Right lobe of liver (tissue), 6 donors: ENCODE measurements at regions of chr14 and their contacts with region 1.

Region 1: DNA sequence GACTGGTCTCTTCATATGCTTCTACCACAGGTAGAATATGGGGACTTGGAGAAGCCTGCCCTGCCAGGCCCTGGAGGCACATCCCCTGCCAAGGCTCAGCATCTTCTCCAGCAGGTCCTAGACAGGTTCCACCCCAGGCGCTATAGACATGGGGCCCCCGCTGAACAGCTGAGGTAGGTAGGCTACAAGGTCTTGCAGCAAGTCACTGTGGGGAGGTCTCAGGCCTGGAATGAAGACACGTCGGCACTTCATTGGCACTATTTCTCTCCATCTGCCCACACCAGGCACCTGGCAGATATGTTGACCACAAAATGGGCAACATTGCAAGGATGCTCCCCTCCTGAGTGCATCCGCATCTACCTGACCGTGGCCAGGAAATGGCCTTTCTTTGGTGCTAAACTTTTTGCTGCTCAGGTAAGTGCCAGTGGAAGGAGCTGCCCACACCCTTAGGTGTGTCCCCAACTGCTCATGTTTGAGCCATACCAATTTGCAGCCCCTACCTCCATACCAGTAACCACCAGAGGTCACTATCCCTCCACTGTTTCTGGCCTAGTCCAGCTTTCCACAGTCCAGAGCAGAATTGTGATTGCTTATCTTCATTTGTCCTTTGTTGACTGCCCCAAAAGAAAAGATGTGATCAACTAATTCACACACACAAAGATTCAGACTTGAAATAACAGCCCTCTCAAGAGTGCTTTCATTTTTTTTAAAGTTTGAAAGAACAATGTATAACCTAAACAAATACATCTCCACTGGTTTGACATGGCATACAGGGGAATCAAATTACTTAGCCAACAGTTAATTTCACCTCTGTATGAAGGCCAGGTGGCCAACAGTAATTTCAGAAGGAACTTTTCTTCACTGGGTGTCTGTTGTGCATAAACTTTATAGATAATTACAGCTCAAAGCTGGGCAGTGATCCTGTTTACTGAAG is 16.1 kb downstream of the PIGH start:
- DNase-seq: no peak
- ATAC-seq: peak; percentile 88 to 92 (median 90)
- H3K4me3 ChIP-seq: no peak overlapping the region
- H3K27ac ChIP-seq: no peak overlapping the region
- H3K4me1 ChIP-seq: peaks cover 0 to 5% (median 2%) of the 10 kb centered on the region in 4 donors
- H3K27me3 ChIP-seq: no peaks in the 10 kb centered on the region
- CTCF ChIP-seq: peak; percentile 61 to 79 (median 70)
- POLR2A ChIP-seq: no peak

Region 2: GRCh38 chr14:67502881-67503699 is 80.9 kb before region 1 on chr14:
- intact Hi-C with region 1: no loop called
- DNase-seq: no peak
- ATAC-seq: peak in 1 of 4 donors; percentile 56
- H3K4me3 ChIP-seq: no peak overlapping the region
- H3K27ac ChIP-seq: no peak overlapping the region
- H3K4me1 ChIP-seq: no peaks in the 10 kb centered on the region
- H3K27me3 ChIP-seq: no peaks in the 10 kb centered on the region
- CTCF ChIP-seq: no peak
- POLR2A ChIP-seq: no peak

Region 3: GRCh38 chr14:67666750-67667449 is 82.9 kb after region 1 on chr14:
- intact Hi-C with region 1: loop called (anchors 10 kb)
- DNase-seq: no peak
- ATAC-seq: peak; percentile 80 to 94 (median 86)
- H3K4me3 ChIP-seq: no peak overlapping the region
- H3K27ac ChIP-seq: no peak overlapping the region
- H3K4me1 ChIP-seq: peaks cover 0 to 5% (median 0%) of the 10 kb centered on the region in 4 donors
- H3K27me3 ChIP-seq: no peaks in the 10 kb centered on the region
- CTCF ChIP-seq: peak; percentile 52 to 76 (median 58)
- POLR2A ChIP-seq: no peak

Region 4: DNA sequence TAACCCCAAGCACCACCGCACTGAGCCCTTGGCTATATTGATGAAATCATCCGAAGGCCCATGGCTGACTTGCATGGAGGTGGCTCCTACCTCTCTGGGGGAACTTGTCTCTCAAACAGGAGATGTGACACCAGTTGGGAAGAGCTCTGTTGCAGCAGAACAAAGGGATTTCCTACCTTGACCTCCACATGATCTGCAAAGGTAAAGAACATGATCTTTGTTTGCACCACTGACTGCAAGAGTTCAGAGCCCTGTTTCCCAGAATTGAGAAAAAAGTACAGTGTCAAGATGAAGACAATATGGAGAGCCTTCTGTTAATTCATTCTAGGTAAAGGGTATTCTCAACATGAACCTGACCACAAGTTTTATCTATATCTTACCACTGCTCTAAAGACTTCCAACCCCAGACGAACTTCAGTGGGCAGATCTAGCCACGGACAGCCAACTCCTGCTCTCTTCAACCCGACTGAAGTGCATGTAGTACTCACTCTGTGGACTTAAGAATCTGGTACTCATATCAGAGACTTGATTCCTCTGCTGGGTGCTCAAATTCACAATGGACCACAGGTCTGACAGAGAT is 200.4 kb after region 1 on chr14:
- intact Hi-C with region 1: no loop called
- DNase-seq: no peak
- ATAC-seq: no peak
- H3K4me3 ChIP-seq: no peak overlapping the region
- H3K27ac ChIP-seq: no peak overlapping the region
- H3K4me1 ChIP-seq: no peaks in the 10 kb centered on the region
- H3K27me3 ChIP-seq: no peaks in the 10 kb centered on the region
- CTCF ChIP-seq: no peak
- POLR2A ChIP-seq: no peak